ENCODE measurements at regions of chr6 and their contacts with region 1.

Region 1: GRCh38 chr6:116279260-116280063 is at the start of gene TSPYL1:
- DNase-seq: peak; percentile 87 to 98 (median 94)
- ATAC-seq: peak; percentile 88 to 92 (median 92)
- H3K4me3 ChIP-seq: peak within 1 kb of the TSS; percentile 69 to 93
- H3K4me3 Mint-ChIP-seq: peak within 1 kb of the TSS; percentile 95 to 99 (median 95)
- H3K27ac ChIP-seq: peak within 1 kb of the TSS; percentile 95
- H3K27ac Mint-ChIP-seq: peak within 1 kb of the TSS; percentile 97 to 100
- H3K4me1 ChIP-seq: peaks cover 31 to 43% of the 10 kb centered on the region in 2 experiments
- H3K4me1 Mint-ChIP-seq: peaks cover 58 to 78% (median 69%) of the 10 kb centered on the region in 3 donors
- H3K27me3 ChIP-seq: no peaks in the 10 kb centered on the region
- H3K27me3 Mint-ChIP-seq: no peaks in the 10 kb centered on the region
- total RNA-seq, gene TSPYL1: 83.4 to 215 (median 86.8) TPM

Region 2: DNA sequence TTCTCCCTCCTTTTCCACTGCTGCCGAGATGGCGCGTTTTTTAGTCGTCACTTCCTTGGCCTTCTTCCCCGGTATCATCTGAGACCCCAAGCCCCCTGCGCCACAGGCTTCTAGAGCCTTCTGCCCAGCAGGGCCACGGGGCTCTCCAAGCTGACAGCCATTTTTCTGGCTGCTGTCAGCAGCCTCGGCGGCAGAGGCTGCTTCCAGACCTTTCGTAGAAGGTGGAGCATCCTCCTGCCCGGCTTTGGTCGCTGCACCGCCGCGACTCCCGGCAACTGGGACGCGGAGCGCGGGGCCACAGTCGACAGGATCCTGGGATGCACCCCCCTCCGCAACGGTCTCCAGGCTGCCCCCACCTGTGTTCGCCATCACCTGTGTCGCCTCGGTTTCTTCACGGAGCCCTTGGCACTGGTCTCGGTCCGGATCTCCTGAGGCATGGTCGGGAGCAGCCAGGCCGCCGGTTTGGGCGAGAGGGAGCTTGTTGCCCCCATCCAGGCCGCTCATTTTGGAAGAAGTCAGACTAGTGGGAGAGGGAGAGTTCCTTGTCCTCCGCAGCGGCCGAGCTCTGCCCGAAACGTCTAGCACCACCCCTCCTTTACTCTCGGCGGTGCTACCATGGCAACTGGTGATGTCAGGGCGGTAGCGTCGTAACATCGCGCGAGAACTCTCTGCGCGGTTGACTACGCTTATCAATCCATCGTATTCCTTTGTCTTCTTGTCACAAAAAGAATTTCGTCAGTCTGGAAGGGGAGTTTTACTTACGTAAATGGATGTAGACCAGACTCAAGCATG is 25.8 kb before region 1 on chr6 and contains the start of gene TSPYL4:
- CTCF ChIA-PET with region 1: interaction called, 4 to 8 read pairs
- POLR2A ChIA-PET with region 1: interaction called, 7 to 75 read pairs
- DNase-seq: peak; percentile 78 to 98 (median 90)
- ATAC-seq: peak; percentile 96 to 98 (median 98)
- H3K4me3 ChIP-seq: peak within 1 kb of the TSS; percentile 71 to 100
- H3K4me3 Mint-ChIP-seq: no peak within 1 kb of the TSS
- H3K27ac ChIP-seq: peak within 1 kb of the TSS; percentile 98
- H3K27ac Mint-ChIP-seq: no peak within 1 kb of the TSS
- H3K4me1 ChIP-seq: peaks cover 28 to 29% of the 10 kb centered on the region in 2 experiments
- H3K4me1 Mint-ChIP-seq: peaks cover 8 to 34% (median 21%) of the 10 kb centered on the region in 3 donors
- H3K27me3 ChIP-seq: no peaks in the 10 kb centered on the region
- H3K27me3 Mint-ChIP-seq: no peaks in the 10 kb centered on the region
- total RNA-seq, gene TSPYL4: 18.6 to 60.2 (median 22.4) TPM

Region 3: DNA sequence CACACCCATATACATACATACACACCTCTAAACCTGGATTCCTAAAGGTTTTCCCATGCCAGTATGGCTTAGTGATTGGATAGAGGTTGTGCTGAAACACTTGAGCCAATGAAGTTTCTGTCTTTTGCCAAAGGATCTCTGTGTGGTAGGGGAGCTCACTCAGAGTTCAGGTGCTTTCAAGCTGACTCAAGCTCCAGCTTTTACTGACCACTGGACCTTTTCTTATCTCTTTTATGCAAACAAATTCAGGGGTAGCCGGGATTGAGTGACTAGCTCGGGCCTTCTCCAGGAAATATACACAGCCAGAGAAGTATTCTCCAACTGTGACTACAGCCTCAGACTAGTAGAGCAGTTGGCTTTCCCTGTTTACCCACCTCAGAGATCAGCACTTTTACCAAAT is 69.8 kb after region 1 on chr6:
- CTCF ChIA-PET with region 1: no interaction called
- POLR2A ChIA-PET with region 1: no interaction called
- DNase-seq: no peak
- ATAC-seq: no peak
- H3K4me3 ChIP-seq: no peak overlapping the region
- H3K4me3 Mint-ChIP-seq: no peak overlapping the region
- H3K27ac ChIP-seq: no peak overlapping the region
- H3K27ac Mint-ChIP-seq: no peak overlapping the region
- H3K4me1 ChIP-seq: no peaks in the 10 kb centered on the region
- H3K4me1 Mint-ChIP-seq: no peaks in the 10 kb centered on the region
- H3K27me3 ChIP-seq: no peaks in the 10 kb centered on the region
- H3K27me3 Mint-ChIP-seq: no peaks in the 10 kb centered on the region

Region 4: DNA sequence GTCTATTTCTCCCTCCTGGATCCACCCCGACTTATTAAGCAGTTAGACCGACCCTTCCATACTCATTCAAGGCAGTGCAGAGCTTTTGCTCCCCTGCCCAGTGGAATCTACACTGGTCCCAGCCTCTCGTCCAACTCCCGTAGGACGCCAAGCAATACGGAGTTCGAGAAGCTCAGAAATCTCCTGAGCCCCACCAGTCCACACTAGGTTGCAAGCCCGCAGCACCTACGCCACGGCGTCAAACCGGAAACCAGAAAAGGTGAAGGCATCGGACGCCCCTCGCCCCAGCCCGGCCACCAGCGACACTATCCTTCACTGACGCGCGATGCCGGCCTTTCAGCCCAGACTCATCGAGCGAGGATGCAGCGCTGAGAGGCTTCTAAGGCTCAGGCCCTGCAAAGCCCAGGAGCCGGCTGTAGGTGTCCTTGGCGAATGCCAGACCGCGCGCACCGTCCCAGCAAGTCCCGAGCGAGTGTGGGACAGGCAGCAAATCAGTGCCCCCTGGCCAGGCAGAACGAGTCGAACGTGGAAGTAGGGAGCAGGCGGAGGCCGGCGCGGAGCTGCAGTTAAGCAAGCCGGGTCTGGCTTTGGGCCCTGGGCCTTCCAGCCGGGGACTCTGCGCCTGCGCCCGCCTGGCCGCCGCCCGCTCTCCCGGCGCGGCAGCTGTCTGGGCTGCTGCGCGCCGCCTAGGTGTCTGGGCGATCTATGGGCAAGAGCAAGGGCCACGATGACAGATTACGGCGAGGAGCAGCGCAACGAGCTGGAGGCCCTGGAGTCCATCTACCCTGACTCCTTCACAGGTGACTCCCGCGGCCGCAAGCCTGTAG is 291.6 kb after region 1 on chr6 and contains the start of gene RWDD1:
- CTCF ChIA-PET with region 1: no interaction called
- POLR2A ChIA-PET with region 1: interaction called, 4 to 21 read pairs
- DNase-seq: peak; percentile 94 to 99 (median 98)
- ATAC-seq: peak; percentile 92 to 97 (median 93)
- H3K4me3 ChIP-seq: peak within 1 kb of the TSS; percentile 92 to 95
- H3K4me3 Mint-ChIP-seq: peak within 1 kb of the TSS; percentile 92 to 100 (median 98)
- H3K27ac ChIP-seq: peak within 1 kb of the TSS; percentile 99
- H3K27ac Mint-ChIP-seq: peak within 1 kb of the TSS; percentile 97 to 99
- H3K4me1 ChIP-seq: peaks cover 8 to 25% of the 10 kb centered on the region in 2 experiments
- H3K4me1 Mint-ChIP-seq: peaks cover 50 to 58% (median 51%) of the 10 kb centered on the region in 3 donors
- H3K27me3 ChIP-seq: no peaks in the 10 kb centered on the region
- H3K27me3 Mint-ChIP-seq: no peaks in the 10 kb centered on the region
- total RNA-seq, gene RWDD1: 29.3 to 48.9 (median 35.8) TPM